Activated CD8-positive, alpha-beta memory T cell treated with anti-CD3 and anti-CD28 coated beads, Interleukin-2, amount 10 ng/mL, durations not matched to agents 7 days and 5 days (primary cell): ENCODE measurements at regions of chr2 and their contacts with region 1.

Region 1: DNA sequence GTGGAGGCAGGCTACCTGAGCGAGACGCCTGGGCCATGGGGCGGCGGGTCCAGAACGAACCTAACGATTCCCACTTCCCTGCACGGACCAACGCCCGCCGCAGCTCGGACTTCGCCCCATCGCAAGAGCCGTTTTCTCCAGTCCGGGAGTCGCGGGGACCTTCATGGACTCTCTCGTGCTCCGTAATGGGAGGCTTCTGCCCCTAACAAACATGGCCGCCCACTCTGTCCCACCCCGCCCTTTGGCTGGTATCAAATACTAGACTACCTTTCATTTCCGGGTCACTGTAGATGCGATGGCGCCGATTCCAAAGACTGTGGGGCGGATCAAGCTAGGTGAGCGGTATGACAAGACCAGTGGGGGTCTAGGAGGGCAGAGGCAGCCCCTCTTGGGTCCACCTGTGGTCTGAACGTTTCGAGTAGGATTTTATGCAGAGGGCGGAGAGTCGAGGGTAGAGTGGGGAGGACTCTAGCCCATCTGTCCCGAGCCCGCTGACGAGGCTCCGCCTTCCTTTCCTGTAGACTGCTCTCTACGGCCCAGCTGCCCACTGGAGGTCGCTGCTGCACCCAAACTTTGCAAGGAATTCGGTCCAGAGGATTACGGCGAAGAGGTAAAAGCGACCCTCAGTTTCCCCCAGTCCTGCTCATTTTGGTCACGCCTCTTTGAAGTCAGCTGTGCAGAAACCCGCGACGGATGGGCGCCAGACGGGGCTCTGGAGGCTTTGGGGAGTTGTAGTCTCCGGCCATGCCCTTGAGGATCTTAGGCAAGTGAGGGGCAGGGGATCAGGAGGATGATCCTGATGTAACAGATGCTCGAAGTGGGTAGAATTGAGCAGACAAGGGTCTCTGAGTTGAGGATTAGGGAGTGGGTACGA is at the starts of genes CCDC142 and TTC31:
- DNase-seq: peak; percentile 97
- ATAC-seq: peak; percentile 95
- H3K4me3 Mint-ChIP-seq: peak within 1 kb of the TSS; percentile 97
- H3K27ac Mint-ChIP-seq: peak within 1 kb of the TSS; percentile 100
- H3K4me1 Mint-ChIP-seq: peaks cover 44% of the 10 kb centered on the region
- H3K27me3 Mint-ChIP-seq: no peaks in the 10 kb centered on the region
- total RNA-seq, gene CCDC142: 26.5 to 29.5 TPM
- total RNA-seq, gene TTC31: 39.4 to 48.8 TPM

Region 2: GRCh38 chr2:74385396-74385795 is 97.6 kb before region 1 on chr2:
- CTCF ChIA-PET with region 1: no interaction called
- DNase-seq: no peak
- ATAC-seq: no peak
- H3K4me3 Mint-ChIP-seq: no peak overlapping the region
- H3K27ac Mint-ChIP-seq: no peak overlapping the region
- H3K4me1 Mint-ChIP-seq: peaks cover 8% of the 10 kb centered on the region
- H3K27me3 Mint-ChIP-seq: no peaks in the 10 kb centered on the region

Region 3: GRCh38 chr2:74464406-74464928 is 18.6 kb before region 1 on chr2:
- CTCF ChIA-PET with region 1: interaction called, 36 read pairs
- DNase-seq: no peak
- ATAC-seq: peak; percentile 3
- H3K4me3 Mint-ChIP-seq: peak overlapping the region; percentile 97
- H3K27ac Mint-ChIP-seq: peak overlapping the region; percentile 76
- H3K4me1 Mint-ChIP-seq: peaks cover 25% of the 10 kb centered on the region
- H3K27me3 Mint-ChIP-seq: no peaks in the 10 kb centered on the region

Region 4: GRCh38 chr2:74493546-74493945 is 10.5 kb after region 1 on chr2:
- CTCF ChIA-PET with region 1: interaction called, 25 read pairs
- DNase-seq: no peak
- ATAC-seq: no peak
- H3K4me3 Mint-ChIP-seq: no peak overlapping the region
- H3K27ac Mint-ChIP-seq: no peak overlapping the region
- H3K4me1 Mint-ChIP-seq: peaks cover 11% of the 10 kb centered on the region
- H3K27me3 Mint-ChIP-seq: peaks cover 10% of the 10 kb centered on the region

Region 5: GRCh38 chr2:74507145-74507925 is 24.3 kb after region 1 on chr2 and contains the start of gene PCGF1:
- CTCF ChIA-PET with region 1: interaction called, 23 read pairs
- DNase-seq: peak; percentile 99
- ATAC-seq: peak; percentile 88
- H3K4me3 Mint-ChIP-seq: peak within 1 kb of the TSS; percentile 90
- H3K27ac Mint-ChIP-seq: peak within 1 kb of the TSS; percentile 99
- H3K4me1 Mint-ChIP-seq: peaks cover 59% of the 10 kb centered on the region
- H3K27me3 Mint-ChIP-seq: peaks cover 24% of the 10 kb centered on the region
- total RNA-seq, gene PCGF1: 15.5 to 34.0 TPM